Ascending aorta (tissue), 2 donors: ENCODE measurements at regions of chr15 and their contacts with region 1.

Region 1: GRCh38 chr15:48493084-48493762 is 152.3 kb downstream of the FBN1 start:
- DNase-seq: no peak
- H3K4me3 ChIP-seq: no peak overlapping the region
- H3K27ac ChIP-seq: peak overlapping the region; percentile 41 to 62
- H3K4me1 ChIP-seq: peaks cover 0 to 4% of the 10 kb centered on the region in 2 donors
- H3K27me3 ChIP-seq: no peaks in the 10 kb centered on the region
- CTCF ChIP-seq: no peak

Region 2: GRCh38 chr15:48800811-48801455 is 307.7 kb after region 1 on chr15:
- intact Hi-C with region 1: loop called (anchors 10 kb)
- DNase-seq: no peak
- H3K4me3 ChIP-seq: no peak overlapping the region
- H3K27ac ChIP-seq: no peak overlapping the region
- H3K4me1 ChIP-seq: no peaks in the 10 kb centered on the region
- H3K27me3 ChIP-seq: no peaks in the 10 kb centered on the region
- CTCF ChIP-seq: peak; percentile 24 to 53 (median 42)